OCI-LY7 (cell line): ENCODE measurements at regions of chr12 and their contacts with region 1.

Region 1: GRCh38 chr12:98332642-98333041 is 182.7 kb upstream of the TMPO start:
- DNase-seq: peak; percentile 80
- H3K4me3 ChIP-seq: no peak overlapping the region
- H3K27ac ChIP-seq: no peak overlapping the region
- H3K4me1 ChIP-seq: peaks cover 35% of the 10 kb centered on the region
- CTCF ChIP-seq: peak; percentile 71

Region 2: DNA sequence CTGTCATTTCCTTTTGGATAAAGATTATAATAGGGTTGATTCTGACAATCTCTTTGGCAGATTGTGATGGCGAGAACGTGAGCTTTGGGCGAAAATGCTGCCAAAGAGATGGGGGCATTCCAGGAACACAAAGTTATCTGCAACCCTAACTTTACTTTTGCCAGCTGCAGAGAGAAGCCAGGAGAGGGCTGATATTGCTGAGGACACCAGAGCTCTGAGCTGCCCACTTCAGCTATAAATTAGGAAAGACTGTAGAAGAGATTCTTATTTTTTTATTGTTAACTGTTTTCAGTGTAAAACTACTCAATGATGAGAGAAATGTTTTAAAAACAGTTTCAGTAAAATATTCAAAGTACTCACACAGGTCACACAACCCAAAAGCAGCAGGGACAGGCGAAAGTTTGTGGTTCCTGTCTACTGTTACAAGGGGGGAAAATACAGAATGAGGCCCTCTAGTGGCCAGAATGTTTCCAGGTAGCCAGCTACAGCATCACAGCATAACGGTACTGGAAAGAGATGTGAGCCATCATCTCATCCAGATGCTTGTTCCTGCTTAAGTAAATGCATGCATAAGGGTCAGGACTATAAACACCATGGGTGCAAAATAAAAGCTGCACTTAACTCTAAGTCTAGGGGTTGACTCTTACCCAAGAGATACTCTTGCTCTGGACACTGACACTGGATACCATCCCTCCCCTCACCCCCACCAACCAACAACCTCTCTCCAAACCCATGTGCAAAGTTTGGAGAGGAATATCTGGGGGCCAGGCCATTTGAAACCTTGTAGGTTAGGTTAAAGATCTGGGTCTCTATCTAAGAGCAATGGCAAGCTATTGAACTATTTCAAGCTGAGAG is 371.7 kb before region 1 on chr12:
- CTCF ChIA-PET with region 1: no interaction called
- POLR2A ChIA-PET with region 1: no interaction called
- intact Hi-C with region 1: loop called (anchors 5 kb)
- DNase-seq: peak; percentile 55
- H3K4me3 ChIP-seq: no peak overlapping the region
- H3K27ac ChIP-seq: no peak overlapping the region
- H3K4me1 ChIP-seq: no peaks in the 10 kb centered on the region
- CTCF ChIP-seq: peak; percentile 90

Region 3: DNA sequence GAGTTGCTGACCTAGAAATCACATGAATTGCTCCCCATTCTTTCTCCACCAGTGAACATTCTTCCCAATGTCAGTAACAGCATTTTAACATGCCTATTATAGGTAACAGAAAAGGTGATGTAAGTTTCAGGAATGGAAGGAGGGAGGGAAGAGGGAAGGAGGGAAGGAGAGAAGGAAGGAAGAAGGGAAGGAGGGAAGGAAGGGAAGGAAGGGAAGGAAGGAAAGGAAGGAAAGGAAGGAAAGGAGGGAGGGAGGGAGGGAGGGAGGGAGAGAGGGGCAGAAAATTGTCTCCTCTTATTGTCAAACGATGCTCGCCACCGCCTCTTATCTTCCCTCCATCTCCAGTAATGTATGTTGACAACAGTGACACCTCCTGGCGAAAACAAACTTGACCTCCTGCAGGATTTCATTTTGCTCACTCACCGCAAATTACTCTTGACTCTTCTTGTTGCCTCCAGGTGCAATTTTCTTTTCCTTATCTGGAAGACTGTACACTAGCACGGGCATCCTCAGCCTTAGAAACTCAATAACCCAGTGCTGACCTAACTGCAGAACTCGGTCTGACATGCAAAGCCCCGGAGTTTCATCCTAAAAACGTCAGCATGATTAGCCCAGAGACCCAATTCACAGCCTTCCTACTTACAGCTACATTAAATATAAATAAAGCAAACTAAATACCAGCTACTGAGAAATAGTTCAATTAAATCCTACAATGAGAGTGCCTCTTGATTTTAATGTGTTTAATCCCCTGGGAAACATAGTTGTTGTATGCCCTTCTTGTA is 329.7 kb before region 1 on chr12:
- CTCF ChIA-PET with region 1: no interaction called
- POLR2A ChIA-PET with region 1: no interaction called
- intact Hi-C with region 1: loop called (anchors 1 kb)
- DNase-seq: peak; percentile 56
- H3K4me3 ChIP-seq: no peak overlapping the region
- H3K27ac ChIP-seq: no peak overlapping the region
- H3K4me1 ChIP-seq: no peaks in the 10 kb centered on the region
- CTCF ChIP-seq: peak; percentile 75

Region 4: GRCh38 chr12:98352218-98352811 is 19.7 kb after region 1 on chr12:
- CTCF ChIA-PET with region 1: no interaction called
- POLR2A ChIA-PET with region 1: no interaction called
- intact Hi-C with region 1: no loop called
- DNase-seq: no peak
- H3K4me3 ChIP-seq: peak overlapping the region; percentile 4
- H3K27ac ChIP-seq: no peak overlapping the region
- H3K4me1 ChIP-seq: peaks cover 27% of the 10 kb centered on the region
- CTCF ChIP-seq: no peak